ENCODE measurements at regions of chr9 and their contacts with region 1.

Region 1: GRCh38 chr9:88258027-88258426 is 119.8 kb upstream of the SPATA31C2 start:
- DNase-seq: peak; percentile 77

Region 2: DNA sequence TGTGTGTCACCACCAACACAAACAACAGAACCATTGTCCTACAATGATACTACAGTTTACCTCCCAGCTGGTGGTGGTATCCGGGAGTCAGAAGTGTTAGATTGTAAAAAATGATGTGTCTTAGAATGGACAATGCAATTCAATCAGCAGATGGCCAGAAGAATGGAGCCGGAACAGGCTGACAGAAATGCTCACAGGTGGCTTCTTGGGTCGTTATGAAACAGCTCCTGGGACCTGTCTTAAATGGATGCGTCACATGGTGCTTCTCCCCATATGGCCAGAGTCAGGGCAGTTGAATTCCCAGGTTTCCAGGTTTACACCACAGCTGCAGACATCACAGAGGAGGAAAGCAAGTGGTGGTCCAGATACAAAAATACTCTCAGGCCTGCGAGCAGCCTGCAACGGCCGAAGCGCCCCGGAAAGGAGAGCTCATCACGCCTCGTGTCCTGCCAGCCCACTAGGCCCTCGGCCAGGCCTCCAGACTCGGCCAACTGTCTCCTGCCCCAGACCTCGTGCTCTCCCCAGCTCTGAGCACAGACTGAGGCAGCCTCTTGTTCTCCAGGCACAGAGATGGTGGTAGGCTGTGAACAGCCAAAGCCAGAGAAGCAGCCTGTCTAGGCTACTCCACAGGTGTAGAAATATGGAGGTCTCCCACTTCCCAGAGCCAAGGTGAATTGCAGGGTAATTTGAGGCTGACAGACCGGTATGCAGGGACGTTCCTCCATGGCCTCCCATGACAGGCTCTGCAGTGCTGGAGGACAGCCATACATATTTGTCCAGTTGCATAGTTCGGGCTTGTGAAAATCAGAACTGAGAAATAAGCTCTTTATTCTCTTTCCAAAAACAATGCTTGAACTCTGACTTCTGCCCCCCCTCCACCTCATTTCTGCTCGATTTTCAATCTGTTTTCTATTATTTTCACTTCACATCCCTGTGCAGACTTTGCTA is 21.2 kb before region 1 on chr9:
- intact Hi-C with region 1: loop called (anchors 1 kb)
- DNase-seq: no peak

Region 3: DNA sequence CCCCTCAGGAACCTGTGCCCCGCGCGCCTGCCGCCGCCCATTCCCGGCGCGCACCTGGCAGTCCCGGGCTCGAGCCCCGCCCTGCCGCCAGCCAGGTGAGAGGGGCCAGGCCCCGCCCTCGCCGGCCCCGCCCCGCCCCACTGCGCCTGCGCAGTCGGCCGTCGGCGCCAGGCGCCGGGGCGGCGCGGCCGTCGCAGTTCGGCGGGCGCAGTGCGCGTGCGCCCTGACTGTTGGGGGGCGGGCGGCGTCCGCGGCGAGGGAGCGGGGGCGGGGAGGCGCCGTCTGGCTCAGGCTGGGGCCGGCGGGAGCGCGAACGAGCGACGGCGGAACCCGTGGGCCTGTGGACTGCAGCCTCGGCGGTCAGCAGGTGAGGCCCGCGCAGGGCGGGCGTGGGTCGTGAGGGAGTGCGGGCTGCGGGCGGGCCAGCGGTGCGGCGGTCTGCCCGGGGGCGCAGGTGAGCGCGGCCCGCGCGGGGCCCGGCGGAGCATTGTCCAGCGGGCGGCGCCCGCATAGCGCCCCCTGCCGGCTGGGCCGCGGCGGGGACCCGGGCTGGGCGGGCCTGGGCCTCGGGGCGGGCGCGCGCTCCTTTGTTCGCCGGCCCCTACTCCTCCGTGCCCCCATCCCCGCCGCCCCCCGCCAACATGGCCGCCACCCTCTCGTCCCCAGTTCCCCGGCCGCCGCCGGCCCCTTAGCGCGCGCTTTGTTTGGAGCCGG is 130.3 kb after region 1 on chr9 and contains the start of gene SPIN1:
- intact Hi-C with region 1: loop called (anchors 2 kb)
- DNase-seq: peak; percentile 91
- total RNA-seq, gene SPIN1: 49.2 TPM

Measured in cardiac septum (tissue), 1 donor.